Heart right ventricle (tissue), 16 donors: ENCODE measurements at regions of chr1 and their contacts with region 1.

Region 1: DNA sequence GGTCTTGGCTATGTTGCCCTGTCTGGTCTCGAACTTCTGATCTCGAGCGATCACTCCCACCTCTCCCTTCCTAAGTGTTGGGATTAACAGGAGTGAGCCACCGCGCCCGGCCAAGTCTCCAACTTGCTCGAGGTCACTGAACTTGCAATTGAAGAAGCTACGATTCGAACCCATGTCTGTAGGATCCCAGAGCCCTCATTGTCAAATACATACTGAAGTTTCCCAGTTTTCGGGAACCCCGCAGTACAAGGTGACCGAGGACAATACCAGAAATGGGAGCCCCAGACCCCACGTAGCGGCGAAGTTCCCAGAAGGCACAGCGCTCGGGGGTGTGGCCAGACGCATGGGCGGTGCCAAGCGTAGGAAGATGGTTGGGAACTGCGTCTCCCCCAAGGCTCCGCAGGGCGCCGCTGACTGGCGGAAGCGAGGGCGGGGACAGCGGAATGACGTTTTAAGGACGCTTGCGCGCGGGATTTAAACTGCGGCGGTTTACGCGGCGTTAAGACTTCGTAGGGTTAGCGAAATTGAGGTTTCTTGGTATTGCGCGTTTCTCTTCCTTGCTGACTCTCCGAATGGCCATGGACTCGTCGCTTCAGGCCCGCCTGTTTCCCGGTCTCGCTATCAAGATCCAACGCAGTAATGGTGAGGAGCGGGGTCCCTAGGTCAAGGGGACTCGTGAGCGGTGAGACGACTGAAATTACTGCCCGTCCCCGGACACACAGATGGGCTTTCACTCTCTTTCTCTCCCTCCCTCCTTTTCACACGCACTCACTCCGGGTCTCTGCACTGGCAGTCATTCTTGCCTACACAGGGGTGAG is at the start of gene KIF2C:
- DNase-seq: peak; percentile 97
- ATAC-seq: peak; percentile 99 to 100 (median 100)
- H3K4me3 ChIP-seq: peak within 1 kb of the TSS; percentile 31 to 64 (median 52)
- H3K27ac ChIP-seq: peak within 1 kb of the TSS; percentile 34 to 91 (median 82)
- H3K4me1 ChIP-seq: peaks cover 0 to 11% (median 8%) of the 10 kb centered on the region in 9 donors
- H3K27me3 ChIP-seq: no peaks in the 10 kb centered on the region
- CTCF ChIP-seq: peak in 3 of 9 donors; percentile 15 to 31 (median 18)
- total RNA-seq, gene KIF2C: 0.73 to 3.7 (median 1.4) TPM

Region 2: DNA sequence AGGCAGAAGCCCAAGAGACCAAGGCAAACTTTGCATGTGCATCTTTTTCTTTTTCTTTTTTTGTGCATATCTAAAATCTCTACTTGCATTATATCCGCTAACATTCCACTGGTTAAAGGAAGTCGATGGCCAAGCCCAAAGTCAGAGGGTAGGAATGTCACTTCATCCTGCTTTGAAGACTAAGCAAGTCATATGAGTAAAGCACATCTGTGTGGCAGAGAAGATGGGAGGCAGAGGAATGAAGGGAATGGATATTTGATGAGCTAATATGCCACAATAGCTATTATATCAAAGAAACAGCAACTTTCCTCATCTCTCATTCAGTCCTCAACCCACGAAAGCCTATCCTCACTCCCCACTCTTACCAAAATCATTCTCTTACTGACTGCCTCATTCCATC is 275.2 kb before region 1 on chr1:
- intact Hi-C with region 1: no loop called
- DNase-seq: no peak
- ATAC-seq: no peak
- H3K4me3 ChIP-seq: no peak overlapping the region
- H3K27ac ChIP-seq: no peak overlapping the region
- H3K4me1 ChIP-seq: peaks cover 0 to 10% (median 0%) of the 10 kb centered on the region in 9 donors
- H3K27me3 ChIP-seq: peaks cover 0 to 11% (median 0%) of the 10 kb centered on the region in 7 donors
- CTCF ChIP-seq: no peak

Region 3: GRCh38 chr1:44684525-44684924 is 55.0 kb before region 1 on chr1:
- intact Hi-C with region 1: no loop called
- DNase-seq: no peak
- ATAC-seq: no peak
- H3K4me3 ChIP-seq: no peak overlapping the region
- H3K27ac ChIP-seq: no peak overlapping the region
- H3K4me1 ChIP-seq: peaks cover 0 to 10% (median 0%) of the 10 kb centered on the region in 9 donors
- H3K27me3 ChIP-seq: no peaks in the 10 kb centered on the region
- CTCF ChIP-seq: no peak

Region 4: GRCh38 chr1:44775078-44775929 is 35.7 kb after region 1 on chr1 and contains the start of gene RPS8:
- intact Hi-C with region 1: loop called in 2 of 10 experiments (anchors 2 to 5 kb)
- DNase-seq: peak; percentile 86 to 95
- ATAC-seq: peak; percentile 89 to 96 (median 94)
- H3K4me3 ChIP-seq: peak within 1 kb of the TSS; percentile 51 to 98 (median 84)
- H3K27ac ChIP-seq: peak within 1 kb of the TSS; percentile 68 to 98 (median 96)
- H3K4me1 ChIP-seq: peaks cover 2 to 43% (median 31%) of the 10 kb centered on the region in 9 donors
- H3K27me3 ChIP-seq: no peaks in the 10 kb centered on the region
- CTCF ChIP-seq: no peak
- total RNA-seq, gene RPS8: 587 to 1,039 (median 681) TPM

Region 5: DNA sequence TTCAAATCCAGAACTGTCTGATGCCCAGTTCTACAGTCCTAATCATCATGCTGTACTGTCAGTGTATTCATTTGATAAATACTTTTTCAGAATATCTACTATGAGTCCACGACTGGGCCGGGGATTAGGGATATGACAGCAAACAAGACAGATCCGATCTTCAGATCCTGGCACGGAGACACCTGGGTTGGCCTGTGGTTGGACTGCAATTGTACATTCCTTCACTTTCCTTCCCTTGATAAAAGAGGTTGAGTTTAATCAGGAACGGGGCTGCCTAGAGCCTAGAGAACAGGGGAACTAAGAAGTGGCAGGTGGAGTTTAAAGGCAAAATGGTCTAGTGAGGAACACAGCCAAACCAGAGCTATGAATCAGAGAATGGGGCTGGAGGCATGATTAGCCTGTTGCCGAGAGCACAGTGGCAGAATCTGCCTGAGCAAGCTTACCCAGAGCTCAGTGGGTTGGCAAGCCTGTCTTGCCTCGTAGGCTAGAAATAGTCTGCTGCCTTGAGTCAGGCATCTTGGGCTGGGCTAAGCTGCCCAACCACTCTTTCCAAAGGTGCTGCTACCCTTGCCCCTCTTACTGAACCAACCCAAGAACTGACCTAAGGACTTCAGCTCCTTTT is 141.6 kb after region 1 on chr1:
- intact Hi-C with region 1: no loop called
- DNase-seq: peak in 1 of 2 donors; percentile 15
- ATAC-seq: peak; percentile 43 to 94 (median 84)
- H3K4me3 ChIP-seq: no peak overlapping the region
- H3K27ac ChIP-seq: peak overlapping the region in 5 of 10 donors; percentile 3 to 47 (median 31)
- H3K4me1 ChIP-seq: peaks cover 0 to 24% (median 3%) of the 10 kb centered on the region in 9 donors
- H3K27me3 ChIP-seq: no peaks in the 10 kb centered on the region
- CTCF ChIP-seq: no peak